ENCODE measurements at regions of chr14 and their contacts with region 1.

Region 1: DNA sequence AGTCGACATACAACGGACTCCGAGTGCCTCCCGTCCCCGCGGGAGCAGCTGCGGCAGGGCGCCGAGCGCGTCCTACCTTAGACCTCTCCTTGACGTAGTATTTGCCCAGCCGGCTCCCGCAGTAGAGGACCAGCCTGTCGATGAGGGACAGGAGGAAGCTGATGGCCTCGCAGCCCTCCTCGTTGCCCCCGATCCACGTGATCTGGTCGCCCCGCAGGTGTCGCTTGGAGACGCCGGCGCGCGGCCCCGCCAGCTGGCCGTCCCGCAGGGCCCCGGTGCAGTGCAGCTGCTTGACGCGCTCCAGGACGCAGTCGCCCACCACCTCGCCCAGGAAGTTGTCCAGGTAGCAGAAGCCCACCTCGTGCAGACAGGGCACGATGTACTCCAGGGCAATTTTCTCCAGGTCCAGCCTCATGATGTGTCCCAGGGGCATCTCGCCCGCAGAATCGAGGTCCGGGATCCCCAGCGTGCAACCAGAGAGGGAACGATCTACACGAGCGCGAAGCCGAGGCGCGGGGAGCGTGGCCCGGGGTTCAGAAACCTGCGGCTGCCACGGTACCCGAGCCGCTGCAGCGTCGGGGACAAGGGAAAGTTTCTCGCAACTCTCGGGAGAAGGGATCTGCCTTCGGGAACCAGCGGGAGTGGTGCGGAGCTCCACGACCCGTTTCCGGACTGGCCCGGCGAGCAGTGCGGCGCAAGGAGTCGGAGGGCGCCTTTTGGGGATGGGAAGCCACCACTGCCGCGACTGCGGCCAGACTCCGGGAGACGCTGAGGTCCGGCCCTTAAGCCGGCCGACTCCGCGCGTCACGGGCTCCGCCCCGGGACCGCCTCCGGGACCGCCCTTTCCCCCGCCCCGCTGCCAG is at the start of gene EGLN3:
- DNase-seq: peak; percentile 90 to 93
- ATAC-seq: peak; percentile 98 to 99 (median 99)
- H3K4me3 ChIP-seq: peak within 1 kb of the TSS; percentile 73 to 93 (median 80)
- H3K27ac ChIP-seq: peak within 1 kb of the TSS; percentile 63 to 92 (median 83)
- H3K4me1 ChIP-seq: peaks cover 0 to 51% (median 28%) of the 10 kb centered on the region in 9 donors
- H3K27me3 ChIP-seq: peaks cover 0 to 53% (median 0%) of the 10 kb centered on the region in 7 donors
- CTCF ChIP-seq: no peak
- total RNA-seq, gene EGLN3: 50.8 to 281 (median 169) TPM

Region 2: DNA sequence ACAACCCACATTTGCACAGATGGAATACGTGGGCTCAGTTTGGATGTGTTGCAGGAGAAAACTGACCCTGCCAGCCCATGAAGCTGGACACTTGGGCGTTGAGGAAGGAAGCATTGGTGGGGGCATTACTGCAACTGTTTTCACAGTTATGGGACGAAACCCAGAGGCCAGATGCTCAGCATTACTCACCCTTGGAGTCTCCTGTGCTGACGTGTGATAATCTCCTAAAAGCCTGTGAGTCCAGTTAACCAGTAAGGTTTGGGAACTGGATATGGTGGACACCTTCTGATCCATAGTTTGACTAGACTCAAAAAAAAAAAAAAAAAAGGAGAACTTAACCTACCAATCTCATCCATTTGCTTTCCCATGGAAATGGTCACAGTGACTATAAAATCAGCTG is 53.1 kb after region 1 on chr14:
- intact Hi-C with region 1: no loop called
- DNase-seq: peak in 1 of 2 donors; percentile 20
- ATAC-seq: peak in 6 of 8 donors; percentile 50 to 80 (median 64)
- H3K4me3 ChIP-seq: no peak overlapping the region
- H3K27ac ChIP-seq: peak overlapping the region in 4 of 10 donors; percentile 11 to 30 (median 22)
- H3K4me1 ChIP-seq: peaks cover 0 to 8% (median 0%) of the 10 kb centered on the region in 9 donors
- H3K27me3 ChIP-seq: no peaks in the 10 kb centered on the region
- CTCF ChIP-seq: no peak

Region 3: GRCh38 chr14:34023824-34024767 is 73.5 kb after region 1 on chr14:
- intact Hi-C with region 1: loop called in 1 of 10 experiments (anchors 10 kb)
- DNase-seq: no peak
- ATAC-seq: no peak
- H3K4me3 ChIP-seq: no peak overlapping the region
- H3K27ac ChIP-seq: no peak overlapping the region
- H3K4me1 ChIP-seq: peaks cover 0 to 11% (median 0%) of the 10 kb centered on the region in 9 donors
- H3K27me3 ChIP-seq: no peaks in the 10 kb centered on the region
- CTCF ChIP-seq: no peak

Region 4: GRCh38 chr14:34059855-34060638 is 109.5 kb after region 1 on chr14:
- intact Hi-C with region 1: loop called in 8 of 10 experiments (anchors 2 to 10 kb)
- DNase-seq: peak; percentile 75 to 85
- ATAC-seq: peak; percentile 92 to 97 (median 94)
- H3K4me3 ChIP-seq: peak overlapping the region; percentile 41 to 84 (median 65)
- H3K27ac ChIP-seq: peak overlapping the region; percentile 91 to 98 (median 94)
- H3K4me1 ChIP-seq: peaks cover 11 to 51% (median 19%) of the 10 kb centered on the region in 9 donors
- H3K27me3 ChIP-seq: peaks cover 0 to 2% (median 0%) of the 10 kb centered on the region in 7 donors
- CTCF ChIP-seq: peak in 6 of 9 donors; percentile 27 to 63 (median 52)

Region 5: GRCh38 chr14:34098045-34098984 is 147.8 kb after region 1 on chr14:
- intact Hi-C with region 1: loop called in 1 of 10 experiments (anchors 10 kb)
- DNase-seq: peak in 1 of 2 donors; percentile 24
- ATAC-seq: peak in 7 of 8 donors; percentile 34 to 77 (median 59)
- H3K4me3 ChIP-seq: no peak overlapping the region
- H3K27ac ChIP-seq: peak overlapping the region in 2 of 10 donors; percentile 18 to 20
- H3K4me1 ChIP-seq: peaks cover 0 to 25% (median 8%) of the 10 kb centered on the region in 9 donors
- H3K27me3 ChIP-seq: no peaks in the 10 kb centered on the region
- CTCF ChIP-seq: peak in 8 of 9 donors; percentile 46 to 78 (median 70)

Measured in heart right ventricle (tissue), 16 donors.